ENCODE measurements at regions of chr1 and their contacts with region 1.

Region 1: GRCh38 chr1:43227143-43227764 is 42.5 kb upstream of the TMEM125 start:
- DNase-seq: no peak
- H3K4me3 ChIP-seq: no peak overlapping the region
- H3K27me3 ChIP-seq: no peaks in the 10 kb centered on the region
- CTCF ChIP-seq: peak; percentile 91

Region 2: GRCh38 chr1:43021547-43022474 is 205.4 kb before region 1 on chr1:
- CTCF ChIA-PET with region 1: no interaction called
- POLR2A ChIA-PET with region 1: no interaction called
- DNase-seq: no peak
- H3K4me3 ChIP-seq: no peak overlapping the region
- H3K27me3 ChIP-seq: peaks cover 18% of the 10 kb centered on the region
- CTCF ChIP-seq: no peak

Region 3: DNA sequence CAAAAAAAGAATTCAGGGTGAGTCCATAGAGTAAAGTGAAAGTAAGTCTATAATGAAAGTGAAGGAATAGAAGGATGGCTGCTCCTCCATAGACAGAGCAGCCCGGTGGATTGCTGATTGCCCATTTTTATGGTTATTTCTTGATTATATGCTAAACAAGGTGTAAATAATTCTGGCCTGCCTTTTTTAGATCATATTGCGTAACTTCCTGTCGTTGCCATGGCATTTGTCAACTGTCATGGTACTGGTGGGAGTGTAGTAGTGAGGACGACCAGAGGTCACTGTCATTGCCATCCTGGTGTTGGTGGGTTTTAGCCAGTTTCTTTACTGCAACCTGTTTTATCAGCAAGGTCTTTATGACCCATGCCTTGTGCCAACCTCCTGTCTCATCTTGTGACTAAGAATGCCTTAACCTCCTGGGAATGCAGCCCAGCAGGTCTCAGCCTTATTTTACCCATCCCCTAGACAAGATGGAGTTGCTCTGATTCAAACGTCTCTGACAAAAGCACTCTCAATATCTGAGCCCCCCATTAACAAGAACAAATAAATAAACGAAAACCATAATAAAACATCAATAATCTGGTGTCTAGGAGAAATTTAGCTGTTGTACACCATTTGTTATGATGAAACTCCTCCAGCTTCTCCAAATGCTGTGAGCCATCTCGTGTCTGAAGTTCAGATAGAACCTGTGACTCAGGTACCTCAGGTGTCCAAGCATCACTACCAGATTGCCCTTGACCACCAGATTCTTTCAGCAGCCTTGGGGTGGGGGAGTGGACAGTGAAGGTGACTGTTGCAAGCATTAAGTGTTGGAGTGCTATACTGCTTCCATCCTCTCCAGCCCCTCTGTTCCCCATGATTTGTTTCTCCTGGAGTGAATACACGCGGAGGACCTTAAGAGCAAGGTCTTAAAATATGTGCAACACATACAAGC is 91.1 kb before region 1 on chr1:
- CTCF ChIA-PET with region 1: no interaction called
- POLR2A ChIA-PET with region 1: no interaction called
- DNase-seq: no peak
- H3K4me3 ChIP-seq: no peak overlapping the region
- H3K27me3 ChIP-seq: peaks cover 5% of the 10 kb centered on the region; the same call in 1 of the 2 replicates
- CTCF ChIP-seq: no peak

Region 4: DNA sequence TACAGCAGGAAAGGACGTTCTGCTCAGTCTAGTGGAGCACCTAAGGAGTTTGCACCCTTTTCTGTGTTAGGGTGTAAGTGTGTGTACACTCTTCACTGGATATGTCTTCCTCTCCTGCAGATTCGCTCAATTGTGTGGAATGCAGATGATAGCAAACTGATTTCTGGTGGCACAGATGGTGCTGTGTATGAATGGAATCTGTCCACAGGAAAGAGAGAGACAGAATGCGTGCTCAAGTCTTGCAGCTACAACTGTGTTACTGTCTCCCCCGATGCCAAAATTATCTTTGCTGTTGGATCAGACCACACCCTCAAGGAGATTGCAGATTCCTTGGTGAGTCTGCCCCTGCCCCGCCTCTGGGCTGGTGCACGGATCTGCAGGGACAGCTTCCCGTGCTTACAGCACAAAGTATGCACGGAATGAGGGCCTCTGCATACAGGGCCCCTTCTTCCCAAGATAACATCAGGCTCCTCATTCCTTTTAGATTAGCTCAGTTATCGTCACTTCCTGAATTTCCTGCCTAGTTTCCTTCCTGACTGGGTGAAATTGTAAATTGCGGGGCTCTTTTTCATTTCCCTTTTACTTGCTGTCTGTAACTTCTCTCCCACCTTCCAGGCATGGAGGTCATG is 20.5 kb before region 1 on chr1:
- CTCF ChIA-PET with region 1: interaction called, 12 read pairs
- POLR2A ChIA-PET with region 1: interaction called, 5 read pairs
- DNase-seq: peak; percentile 97
- H3K4me3 ChIP-seq: peak overlapping the region; percentile 8; the same call in 1 of the 2 replicates
- H3K27me3 ChIP-seq: no peaks in the 10 kb centered on the region
- CTCF ChIP-seq: no peak

Region 5: DNA sequence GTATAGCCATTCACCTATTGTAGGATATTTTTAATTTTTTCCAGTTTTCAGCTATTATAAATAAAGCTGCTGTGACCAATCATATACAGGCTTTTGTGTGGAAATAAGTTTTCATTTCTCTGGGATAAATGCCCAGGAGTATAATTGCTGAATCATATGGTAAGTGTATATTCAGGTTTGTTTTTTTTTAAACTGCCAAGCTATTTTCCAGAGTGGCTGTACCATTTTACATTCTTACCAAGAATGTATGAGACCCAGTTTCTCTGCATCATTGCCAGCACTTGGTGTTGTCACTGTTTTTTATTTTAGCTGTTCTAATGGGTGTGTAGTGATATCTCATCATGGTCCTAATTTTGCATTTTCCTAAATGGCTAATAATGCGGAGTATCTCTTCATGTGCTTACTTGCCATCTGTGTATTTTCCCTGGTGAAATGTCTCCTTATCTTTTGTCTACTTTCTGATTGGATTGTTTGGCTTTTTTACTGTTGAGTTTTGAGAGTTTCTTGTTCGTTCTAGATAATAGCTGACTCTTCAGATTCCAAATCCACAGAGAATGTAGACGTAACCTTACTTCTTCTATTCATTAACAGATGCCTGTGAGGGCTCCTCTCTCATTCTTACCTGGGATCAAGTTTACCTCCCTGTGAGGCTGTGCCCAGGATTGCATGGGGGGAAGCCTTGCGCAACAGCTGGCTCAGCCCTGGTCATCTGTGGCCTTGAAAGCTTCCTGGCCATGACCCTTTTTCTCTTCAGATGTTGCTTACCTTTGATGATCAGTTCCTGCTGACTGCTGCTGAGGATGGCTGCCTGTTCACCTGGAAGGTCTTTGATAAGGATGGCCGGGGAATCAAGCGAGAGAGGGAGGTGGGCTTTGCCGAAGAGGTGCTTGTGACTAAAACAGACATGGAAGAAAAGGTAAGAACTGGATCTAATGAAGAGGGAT is 12.5 kb before region 1 on chr1:
- CTCF ChIA-PET with region 1: interaction called, 14 read pairs
- POLR2A ChIA-PET with region 1: no interaction called
- DNase-seq: no peak
- H3K4me3 ChIP-seq: no peak overlapping the region
- H3K27me3 ChIP-seq: no peaks in the 10 kb centered on the region
- CTCF ChIP-seq: no peak

Region 6: DNA sequence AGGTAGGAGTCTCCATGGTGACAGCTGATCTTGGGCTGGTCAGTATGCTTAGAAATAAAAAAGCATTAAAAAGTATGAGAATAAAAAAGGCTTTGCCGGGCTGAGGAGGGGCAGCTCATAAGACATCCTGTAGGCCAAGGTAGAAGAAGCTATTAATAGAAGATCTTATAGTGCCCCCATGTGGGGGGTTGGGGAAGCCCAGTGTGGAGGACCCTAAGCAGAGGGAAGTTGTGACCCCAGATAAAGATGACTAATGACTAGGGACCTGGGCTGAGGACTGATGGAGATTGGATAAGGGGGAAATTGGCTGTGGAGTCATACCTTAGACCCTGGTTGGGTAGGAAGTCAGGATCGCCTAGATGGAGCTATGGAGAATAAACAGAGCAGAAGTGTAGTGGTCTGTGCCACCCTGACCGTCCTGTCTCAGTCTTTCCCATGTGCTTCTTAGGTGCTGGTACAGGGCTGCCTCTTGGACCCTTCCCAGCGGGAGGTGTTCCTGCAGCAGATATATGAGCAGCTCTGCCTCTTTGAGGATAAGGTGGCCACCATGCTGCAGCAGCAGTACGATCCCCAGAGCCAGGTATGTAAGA is 187.5 kb after region 1 on chr1:
- CTCF ChIA-PET with region 1: interaction called, 17 read pairs
- POLR2A ChIA-PET with region 1: no interaction called
- DNase-seq: no peak
- H3K4me3 ChIP-seq: no peak overlapping the region
- H3K27me3 ChIP-seq: no peaks in the 10 kb centered on the region
- CTCF ChIP-seq: peak; percentile 42